ENCODE measurements at regions of chr2 and their contacts with region 1.

Region 1: GRCh38 chr2:160109936-160110673 is 47.7 kb upstream of the PLA2R1 start:
- DNase-seq: peak; percentile 19 to 84 (median 64)

Region 2: DNA sequence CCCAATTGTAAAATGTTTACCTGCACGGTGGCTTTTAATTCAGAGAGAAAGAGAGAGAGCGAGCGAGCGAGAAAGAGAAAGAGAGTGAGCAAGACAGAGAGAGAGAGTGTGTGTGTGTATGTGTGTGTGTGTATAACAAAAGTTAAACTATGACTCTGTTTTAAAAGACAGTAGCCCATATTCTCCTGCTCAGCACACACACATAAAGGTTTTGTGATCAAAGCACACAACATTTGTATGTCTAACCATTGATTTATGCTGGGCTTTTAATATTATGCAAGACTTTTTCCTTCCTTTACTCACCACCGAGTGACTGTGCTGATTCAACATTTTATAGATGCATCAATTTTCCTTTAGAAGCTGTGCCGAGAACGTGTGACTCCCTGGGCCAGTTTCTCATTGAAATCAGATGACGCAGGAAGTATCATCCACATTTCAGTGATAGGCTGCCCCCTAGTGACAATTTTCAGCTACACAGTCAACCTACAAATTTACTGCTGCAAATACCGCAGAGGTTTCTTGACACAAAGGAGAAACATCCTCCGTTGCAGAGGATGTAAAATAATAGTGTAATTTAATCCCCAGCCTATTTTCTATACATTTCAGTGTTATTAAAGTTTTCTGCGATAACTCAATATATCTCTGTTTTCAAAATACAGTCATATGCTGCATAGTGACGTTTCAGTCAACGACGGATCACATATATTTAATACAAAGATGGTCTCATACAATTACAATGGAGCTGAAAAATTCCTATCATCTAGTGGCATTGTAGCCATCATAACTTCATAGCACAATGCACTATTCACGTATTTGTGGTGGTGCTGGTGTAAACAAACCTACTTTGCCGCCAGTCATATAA is 884.3 kb after region 1 on chr2:
- intact Hi-C with region 1: loop called (anchors 10 kb)
- DNase-seq: peak in 40 of 42 donors; percentile 8 to 91 (median 71)